ENCODE measurements at regions of chr17 and their contacts with region 1.

Region 1: DNA sequence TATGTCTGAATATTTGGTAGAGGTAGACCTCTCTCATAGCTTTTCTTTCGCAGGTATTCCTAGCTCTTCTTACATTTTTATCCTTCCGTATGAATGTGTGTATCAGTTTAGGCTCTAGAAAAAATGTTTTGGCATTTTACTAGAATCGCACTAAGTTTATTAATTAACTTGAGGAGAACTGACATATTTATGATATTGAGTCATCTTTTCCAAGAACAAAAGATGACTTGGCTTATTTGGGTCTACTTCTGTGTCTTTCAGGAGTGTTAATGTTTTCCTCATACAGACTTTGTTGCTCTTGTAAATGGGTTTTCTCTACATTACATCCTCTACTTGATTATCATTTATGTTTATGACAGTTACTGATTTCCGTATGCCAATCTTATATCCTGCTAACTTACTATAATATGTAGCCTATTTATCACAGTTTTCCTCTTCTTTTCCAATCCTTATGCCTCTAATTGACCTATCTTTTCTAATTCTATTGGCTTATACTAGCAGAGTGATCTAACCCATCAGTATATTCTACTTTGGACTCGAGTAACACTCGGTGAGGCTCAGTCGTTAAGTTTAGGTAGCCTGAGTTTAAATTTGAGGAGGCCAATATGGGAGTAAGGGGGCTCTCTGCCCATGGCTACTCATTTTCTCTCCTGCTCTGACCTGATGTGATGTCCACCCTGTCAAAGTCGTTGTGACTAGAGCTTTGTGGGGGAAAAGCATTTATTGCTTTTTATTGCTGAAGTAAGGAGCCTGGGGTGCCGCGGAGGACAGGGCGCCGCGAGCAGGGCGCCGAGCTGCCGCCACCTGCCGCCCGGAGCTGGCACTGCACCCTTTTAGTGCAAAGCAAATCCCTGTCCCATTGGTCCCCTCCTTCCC is 20.0 kb downstream of the ST6GALNAC1 start:
- DNase-seq: peak; percentile 87
- ATAC-seq: peak; percentile 96
- H3K4me3 Mint-ChIP-seq: no peak overlapping the region
- H3K27ac Mint-ChIP-seq: no peak overlapping the region
- H3K4me1 Mint-ChIP-seq: peaks cover 7% of the 10 kb centered on the region
- H3K27me3 Mint-ChIP-seq: peaks cover 7% of the 10 kb centered on the region

Region 2: GRCh38 chr17:76523084-76524037 is 100.1 kb before region 1 on chr17:
- CTCF ChIA-PET with region 1: interaction called, 44 read pairs
- POLR2A ChIA-PET with region 1: no interaction called
- intact Hi-C with region 1: loop called (anchors 1 kb)
- DNase-seq: peak; percentile 89
- ATAC-seq: peak; percentile 89
- H3K4me3 Mint-ChIP-seq: no peak overlapping the region
- H3K27ac Mint-ChIP-seq: no peak overlapping the region
- H3K4me1 Mint-ChIP-seq: peaks cover 13% of the 10 kb centered on the region
- H3K27me3 Mint-ChIP-seq: no peaks in the 10 kb centered on the region

Region 3: GRCh38 chr17:76567634-76568432 is 55.7 kb before region 1 on chr17:
- CTCF ChIA-PET with region 1: interaction called, 6 read pairs
- POLR2A ChIA-PET with region 1: interaction called, 12 read pairs
- intact Hi-C with region 1: loop called in 1 of 2 experiments (anchors 10 kb)
- DNase-seq: no peak
- ATAC-seq: peak; percentile 4
- H3K4me3 Mint-ChIP-seq: no peak overlapping the region
- H3K27ac Mint-ChIP-seq: no peak overlapping the region
- H3K4me1 Mint-ChIP-seq: peaks cover 18% of the 10 kb centered on the region
- H3K27me3 Mint-ChIP-seq: no peaks in the 10 kb centered on the region

Region 4: GRCh38 chr17:76612977-76613851 is 10.3 kb before region 1 on chr17:
- CTCF ChIA-PET with region 1: interaction called, 22 read pairs
- POLR2A ChIA-PET with region 1: no interaction called
- intact Hi-C with region 1: no loop called
- DNase-seq: no peak
- ATAC-seq: no peak
- H3K4me3 Mint-ChIP-seq: no peak overlapping the region
- H3K27ac Mint-ChIP-seq: no peak overlapping the region
- H3K4me1 Mint-ChIP-seq: no peaks in the 10 kb centered on the region
- H3K27me3 Mint-ChIP-seq: no peaks in the 10 kb centered on the region

Region 5: GRCh38 chr17:76671123-76671911 is 47.8 kb after region 1 on chr17:
- CTCF ChIA-PET with region 1: interaction called, 15 read pairs
- POLR2A ChIA-PET with region 1: no interaction called
- intact Hi-C with region 1: no loop called
- DNase-seq: peak; percentile 100
- ATAC-seq: peak; percentile 100
- H3K4me3 Mint-ChIP-seq: peak overlapping the region; percentile 87
- H3K27ac Mint-ChIP-seq: peak overlapping the region; percentile 95
- H3K4me1 Mint-ChIP-seq: peaks cover 25% of the 10 kb centered on the region
- H3K27me3 Mint-ChIP-seq: no peaks in the 10 kb centered on the region

Measured in activated CD4-positive, alpha-beta T cell treated with anti-CD3 and anti-CD28 coated beads for 36 hours (primary cell).